HCT116 (cell line): ENCODE measurements at regions of chr16 and their contacts with region 1.

Region 1: DNA sequence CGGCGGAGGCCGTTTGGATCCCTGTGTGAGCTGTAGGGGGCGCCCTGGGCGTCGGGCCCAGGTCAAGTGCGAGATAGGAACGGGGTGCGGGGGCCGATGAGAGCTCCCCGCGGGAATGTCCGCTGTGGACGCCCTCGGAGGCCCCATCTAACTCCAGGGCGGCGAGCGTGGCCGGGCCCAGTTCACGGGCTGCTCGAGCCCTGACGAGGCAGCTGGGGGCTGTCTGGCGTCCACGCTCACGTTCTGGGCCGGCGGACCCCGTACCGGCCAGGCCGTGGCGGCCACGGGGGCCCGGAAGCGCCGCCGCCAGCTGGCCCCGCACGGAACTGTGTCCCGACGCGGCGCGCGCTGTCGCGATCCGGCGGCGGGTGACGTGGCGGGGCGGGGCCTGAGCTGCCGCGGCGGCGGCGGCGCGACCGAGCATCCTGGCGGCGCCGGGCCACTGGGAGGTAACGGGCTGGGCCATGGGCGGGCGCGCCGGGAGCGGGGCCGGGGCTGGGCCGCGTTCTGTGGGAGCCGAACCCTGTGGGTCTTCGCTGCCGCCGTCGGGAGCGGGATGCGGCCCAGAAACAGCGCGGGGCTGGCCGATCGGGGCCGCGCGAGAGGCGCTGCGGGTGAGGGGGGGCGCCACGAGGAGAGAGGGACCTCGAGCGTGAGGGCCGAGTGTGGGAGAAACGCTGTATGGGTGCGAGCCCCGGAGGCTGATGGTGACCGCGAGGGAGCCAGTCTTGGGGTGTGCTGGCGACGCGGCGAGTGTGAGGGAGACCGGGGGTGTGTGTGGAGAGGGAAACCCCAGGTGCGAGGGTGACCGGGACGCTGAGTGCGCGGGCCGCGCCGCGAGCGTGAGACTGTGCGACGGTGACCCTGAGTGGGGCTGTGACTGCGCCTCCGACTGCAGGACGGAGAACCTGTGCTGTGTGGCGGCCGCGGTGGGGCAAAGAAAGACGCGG is at the start of gene SLC7A6:
- DNase-seq: peak; percentile 27
- ATAC-seq: peak; percentile 74
- H3K4me3 ChIP-seq: peak within 1 kb of the TSS; percentile 73 to 85
- H3K27ac ChIP-seq: peak within 1 kb of the TSS; percentile 91
- H3K4me1 ChIP-seq: peaks cover 25 to 33% of the 10 kb centered on the region in 2 experiments
- H3K27me3 ChIP-seq: no peaks in the 10 kb centered on the region
- CTCF ChIP-seq: peak; percentile 67 to 76 (median 71)
- POLR2A ChIP-seq: peak; percentile 82
- RAD21 ChIP-seq: no peak
- total RNA-seq, gene SLC7A6: 28.5 TPM

Region 2: GRCh38 chr16:68064791-68065365 is 199.5 kb before region 1 on chr16:
- CTCF ChIA-PET with region 1: no interaction called
- POLR2A ChIA-PET with region 1: no interaction called
- RAD21 ChIA-PET with region 1: no interaction called
- intact Hi-C with region 1: no loop called
- DNase-seq: peak; percentile 28
- ATAC-seq: peak; percentile 98
- H3K4me3 ChIP-seq: no peak overlapping the region
- H3K27ac ChIP-seq: no peak overlapping the region
- H3K4me1 ChIP-seq: no peaks in the 10 kb centered on the region
- H3K27me3 ChIP-seq: no peaks in the 10 kb centered on the region
- CTCF ChIP-seq: peak; percentile 77 to 93 (median 85)
- POLR2A ChIP-seq: no peak
- RAD21 ChIP-seq: peak; percentile 77

Region 3: DNA sequence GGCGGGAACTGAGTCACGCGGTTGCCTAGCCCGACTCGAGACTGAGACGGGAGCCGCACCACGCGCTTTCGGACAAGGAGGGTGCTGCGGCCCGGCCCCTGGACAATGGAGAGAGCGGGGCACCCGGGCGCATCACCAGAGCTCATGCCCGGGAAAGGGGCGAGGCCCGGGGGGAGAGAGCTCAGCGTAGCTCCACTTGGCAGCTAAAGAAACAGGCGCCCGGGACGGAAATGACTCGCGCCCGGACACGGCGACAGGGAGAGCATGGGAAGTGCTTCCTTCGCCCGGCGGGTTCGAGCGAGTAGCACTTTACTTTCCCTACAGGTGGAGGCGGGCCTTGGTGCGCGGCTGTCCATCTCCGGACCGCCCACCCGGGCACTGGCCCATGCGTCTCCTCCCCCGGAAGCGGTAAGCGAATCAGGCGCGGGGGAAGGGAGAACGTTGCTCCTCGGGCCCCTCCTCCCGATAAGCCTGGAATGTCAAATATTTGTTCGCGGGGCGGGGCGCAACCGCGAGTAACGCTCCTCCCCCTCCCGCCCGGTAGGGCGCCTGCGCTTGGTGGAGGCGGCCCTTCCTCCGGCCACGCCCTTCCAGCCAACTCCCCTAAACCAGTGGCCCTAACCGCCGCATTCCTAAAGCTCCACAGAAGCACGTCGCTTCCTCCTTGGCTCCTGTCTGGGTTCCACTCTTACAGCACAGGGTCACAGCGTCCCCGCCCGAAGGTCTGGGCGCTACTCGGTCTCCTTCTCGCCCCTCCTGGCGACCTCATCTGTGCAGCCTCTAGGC is 27.0 kb before region 1 on chr16:
- CTCF ChIA-PET with region 1: interaction called, 14 read pairs
- POLR2A ChIA-PET with region 1: interaction called, 3 read pairs
- RAD21 ChIA-PET with region 1: no interaction called
- intact Hi-C with region 1: no loop called
- DNase-seq: peak; percentile 96
- ATAC-seq: peak; percentile 77
- H3K4me3 ChIP-seq: peak overlapping the region; percentile 56 to 88
- H3K27ac ChIP-seq: peak overlapping the region; percentile 86
- H3K4me1 ChIP-seq: peaks cover 29 to 47% of the 10 kb centered on the region in 2 experiments
- H3K27me3 ChIP-seq: no peaks in the 10 kb centered on the region
- CTCF ChIP-seq: no peak
- POLR2A ChIP-seq: peak; percentile 94
- RAD21 ChIP-seq: no peak

Region 4: GRCh38 chr16:68251832-68252231 is 12.6 kb before region 1 on chr16:
- CTCF ChIA-PET with region 1: interaction called, 16 read pairs
- POLR2A ChIA-PET with region 1: interaction called, 3 read pairs
- RAD21 ChIA-PET with region 1: no interaction called
- intact Hi-C with region 1: no loop called
- DNase-seq: no peak
- ATAC-seq: no peak
- H3K4me3 ChIP-seq: no peak overlapping the region
- H3K27ac ChIP-seq: no peak overlapping the region
- H3K4me1 ChIP-seq: peaks cover 0 to 2% of the 10 kb centered on the region in 2 experiments; a peak in 1 of 4 replicates
- H3K27me3 ChIP-seq: no peaks in the 10 kb centered on the region
- CTCF ChIP-seq: no peak
- POLR2A ChIP-seq: no peak
- RAD21 ChIP-seq: no peak

Region 5: DNA sequence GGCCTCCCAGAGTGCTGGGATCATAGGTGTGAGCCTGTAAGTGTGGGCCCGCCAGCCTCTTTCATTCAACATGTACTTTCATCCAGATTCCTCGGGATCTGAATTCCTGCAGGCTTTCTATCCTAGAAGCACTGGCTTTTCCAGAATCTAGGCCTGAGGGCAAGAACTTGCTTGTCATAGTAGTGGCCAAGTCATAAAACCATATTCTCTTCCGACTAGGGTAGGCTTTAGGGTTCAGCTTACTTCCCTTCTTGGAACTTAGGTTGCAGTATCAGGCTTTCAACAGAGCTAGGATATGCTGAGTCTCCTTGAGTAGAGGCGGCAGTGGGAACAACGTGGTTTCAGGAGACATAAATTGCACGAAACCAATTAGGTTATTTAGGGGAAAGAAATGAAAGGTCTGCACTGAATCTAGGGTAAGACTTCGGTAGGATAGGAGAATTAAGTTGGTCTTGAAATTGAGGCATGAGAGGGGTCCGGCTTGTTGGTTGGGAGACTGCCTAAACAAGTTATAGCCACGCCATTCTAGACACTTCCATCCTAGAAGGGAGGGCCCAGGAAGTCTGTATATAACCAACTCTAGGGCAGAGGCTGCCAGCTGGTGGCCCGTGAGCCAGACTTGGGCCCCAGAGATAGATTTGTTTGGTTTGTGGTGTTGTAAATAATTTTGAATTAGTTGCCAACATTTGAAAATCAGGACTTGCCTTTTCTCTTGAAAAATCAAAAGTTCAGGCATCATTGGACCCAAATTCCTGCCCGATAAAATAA is 15.6 kb after region 1 on chr16:
- CTCF ChIA-PET with region 1: interaction called, 10 read pairs
- POLR2A ChIA-PET with region 1: no interaction called
- RAD21 ChIA-PET with region 1: no interaction called
- intact Hi-C with region 1: no loop called
- DNase-seq: no peak
- ATAC-seq: no peak
- H3K4me3 ChIP-seq: no peak overlapping the region
- H3K27ac ChIP-seq: no peak overlapping the region
- H3K4me1 ChIP-seq: no peaks in the 10 kb centered on the region
- H3K27me3 ChIP-seq: no peaks in the 10 kb centered on the region
- CTCF ChIP-seq: no peak
- POLR2A ChIP-seq: no peak
- RAD21 ChIP-seq: no peak

Region 6: DNA sequence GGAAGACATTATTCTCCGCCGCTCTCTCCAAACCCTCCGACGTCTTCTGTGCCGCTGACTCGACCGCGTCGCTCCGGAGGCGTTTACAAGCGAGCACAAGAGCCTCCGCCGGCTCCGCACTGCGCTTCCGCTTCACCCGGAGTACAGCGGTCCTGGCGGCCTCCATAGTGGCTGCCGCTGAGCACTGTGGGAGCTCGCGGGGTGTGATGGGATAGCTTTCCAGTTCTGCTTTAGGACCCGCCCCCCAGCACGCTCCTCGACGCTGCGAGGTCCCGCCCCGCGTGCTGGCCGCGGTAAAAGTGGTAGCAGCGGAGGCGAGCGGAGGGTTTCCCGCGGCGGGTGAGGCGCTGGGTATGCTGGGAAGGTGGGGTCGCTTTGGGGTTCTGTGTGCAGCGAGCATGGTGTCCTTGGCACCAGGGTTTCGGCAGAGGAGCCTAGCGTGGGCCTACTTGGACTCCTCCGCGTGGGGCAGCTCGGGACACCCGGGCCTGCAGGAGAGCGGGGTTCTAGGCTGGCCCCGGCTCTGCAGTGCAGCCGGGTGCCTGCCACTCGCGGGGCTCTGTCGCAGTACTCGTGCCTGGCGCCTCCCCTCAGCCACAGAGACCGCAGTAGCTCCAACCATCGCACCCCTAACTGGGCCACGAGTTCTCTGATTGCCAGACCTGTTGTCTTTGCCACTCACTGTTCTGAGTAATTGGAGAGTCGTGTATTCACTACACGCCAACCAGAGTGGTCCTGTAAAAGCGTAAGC is 46.5 kb after region 1 on chr16 and contains the starts of genes PRMT7 and SLC7A6OS:
- CTCF ChIA-PET with region 1: interaction called, 5 read pairs
- POLR2A ChIA-PET with region 1: interaction called, 6 read pairs
- RAD21 ChIA-PET with region 1: interaction called in 1 of 2 experiments, 5 read pairs
- intact Hi-C with region 1: loop called (anchors 5 kb)
- DNase-seq: peak; percentile 74
- ATAC-seq: peak; percentile 97
- H3K4me3 ChIP-seq: peak within 1 kb of the TSS; percentile 96 to 97
- H3K27ac ChIP-seq: peak within 1 kb of the TSS; percentile 70
- H3K4me1 ChIP-seq: peaks cover 7 to 17% of the 10 kb centered on the region in 2 experiments; a peak in 3 of 4 replicates
- H3K27me3 ChIP-seq: no peaks in the 10 kb centered on the region
- CTCF ChIP-seq: no peak
- POLR2A ChIP-seq: peak; percentile 89
- RAD21 ChIP-seq: no peak
- total RNA-seq, gene PRMT7: 34.4 TPM
- total RNA-seq, gene SLC7A6OS: 16.4 TPM

Region 7: GRCh38 chr16:68328151-68328859 is 63.9 kb after region 1 on chr16:
- CTCF ChIA-PET with region 1: interaction called, 54 read pairs
- POLR2A ChIA-PET with region 1: interaction called, 3 read pairs
- RAD21 ChIA-PET with region 1: interaction called, 3 to 4 read pairs
- intact Hi-C with region 1: loop called (anchors 1 kb)
- DNase-seq: peak; percentile 72
- ATAC-seq: peak; percentile 98
- H3K4me3 ChIP-seq: no peak overlapping the region
- H3K27ac ChIP-seq: no peak overlapping the region
- H3K4me1 ChIP-seq: peaks cover 6 to 7% of the 10 kb centered on the region in 2 experiments; a peak in 3 of 4 replicates
- H3K27me3 ChIP-seq: no peaks in the 10 kb centered on the region
- CTCF ChIP-seq: peak; percentile 92 to 94 (median 94)
- POLR2A ChIP-seq: no peak
- RAD21 ChIP-seq: peak; percentile 96